T-cell (primary cell): ENCODE measurements at regions of chr17 and their contacts with region 1.

Region 1: DNA sequence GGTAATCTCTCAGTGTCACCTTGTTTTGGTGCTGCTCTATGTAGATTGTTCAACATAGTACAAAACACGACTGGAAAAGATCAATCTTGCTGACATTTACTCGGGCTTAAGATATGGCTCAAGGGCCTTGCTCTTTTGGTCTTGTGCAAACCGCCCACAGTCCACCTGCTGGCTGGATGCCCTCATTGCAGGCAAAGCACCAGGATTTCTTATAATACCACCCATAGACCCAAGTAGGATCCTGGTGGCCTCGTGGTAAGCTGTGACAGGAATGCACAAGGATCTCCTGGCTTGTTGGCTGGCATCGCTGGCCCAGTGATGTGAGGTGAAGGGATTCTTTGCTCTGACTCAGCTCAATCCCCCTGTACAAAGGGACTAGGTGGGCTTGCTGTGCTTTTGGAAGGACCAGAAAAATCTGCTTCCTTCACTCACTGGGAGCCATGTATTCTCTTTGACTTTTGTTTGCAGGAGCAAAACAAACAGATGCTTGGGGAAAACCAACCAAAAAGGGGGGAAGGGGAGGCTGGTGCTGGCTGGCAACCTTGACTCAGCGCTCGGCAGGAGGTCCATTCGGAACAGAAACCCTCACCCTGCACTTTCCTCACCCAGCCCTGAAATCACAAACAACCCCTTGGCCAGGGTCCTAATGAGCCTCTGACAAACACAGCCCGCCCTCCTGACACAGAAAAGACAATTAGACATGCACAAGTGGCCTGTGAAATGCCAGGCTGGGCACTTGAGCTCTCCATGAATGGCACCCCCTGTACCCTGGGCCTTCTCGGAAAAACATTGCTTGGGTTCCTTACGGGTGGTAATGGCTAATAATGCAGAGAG is 36.6 kb upstream of the MED9 start:
- DNase-seq: peak; percentile 37 to 86 (median 70)
- ATAC-seq: peak; percentile 55 to 79 (median 72)
- H3K4me3 ChIP-seq: no peak overlapping the region
- H3K4me3 Mint-ChIP-seq: no peak overlapping the region
- H3K27ac ChIP-seq: no peak overlapping the region
- H3K27ac Mint-ChIP-seq: peak overlapping the region in 1 of 2 donors; percentile 34
- H3K4me1 ChIP-seq: no peaks in the 10 kb centered on the region
- H3K4me1 Mint-ChIP-seq: peaks cover 0 to 8% (median 8%) of the 10 kb centered on the region in 3 donors
- H3K27me3 ChIP-seq: no peaks in the 10 kb centered on the region
- H3K27me3 Mint-ChIP-seq: no peaks in the 10 kb centered on the region

Region 2: DNA sequence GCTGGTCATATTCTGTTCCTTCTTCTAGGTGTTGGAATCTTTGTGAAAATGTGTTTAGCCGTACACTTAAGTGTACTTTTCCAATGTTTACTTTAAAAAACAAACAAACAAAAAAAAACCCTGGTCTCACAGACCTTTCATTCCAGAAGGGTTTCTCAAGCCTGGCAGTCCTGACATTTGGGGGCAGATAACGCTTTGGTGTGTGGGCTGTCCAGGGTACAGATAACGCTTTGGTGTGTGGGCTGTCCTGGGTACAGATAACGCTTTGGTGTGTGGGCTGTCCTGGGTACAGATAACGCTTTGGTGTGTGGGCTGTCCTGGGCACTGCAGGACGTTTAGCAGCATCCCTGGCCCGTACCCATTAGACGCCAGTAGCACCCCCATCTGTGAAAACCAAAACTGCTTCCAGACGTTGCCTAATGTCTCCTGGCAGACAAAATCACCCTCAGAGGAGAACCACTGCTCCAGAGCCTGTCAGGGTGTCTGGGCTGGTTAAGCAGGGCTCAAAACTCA is 188.0 kb before region 1 on chr17:
- CTCF ChIA-PET with region 1: no interaction called
- POLR2A ChIA-PET with region 1: no interaction called
- DNase-seq: no peak
- ATAC-seq: no peak
- H3K4me3 ChIP-seq: no peak overlapping the region
- H3K4me3 Mint-ChIP-seq: no peak overlapping the region
- H3K27ac ChIP-seq: no peak overlapping the region
- H3K27ac Mint-ChIP-seq: no peak overlapping the region
- H3K4me1 ChIP-seq: no peaks in the 10 kb centered on the region
- H3K4me1 Mint-ChIP-seq: peaks cover 0 to 5% (median 4%) of the 10 kb centered on the region in 3 donors
- H3K27me3 ChIP-seq: no peaks in the 10 kb centered on the region
- H3K27me3 Mint-ChIP-seq: no peaks in the 10 kb centered on the region

Region 3: DNA sequence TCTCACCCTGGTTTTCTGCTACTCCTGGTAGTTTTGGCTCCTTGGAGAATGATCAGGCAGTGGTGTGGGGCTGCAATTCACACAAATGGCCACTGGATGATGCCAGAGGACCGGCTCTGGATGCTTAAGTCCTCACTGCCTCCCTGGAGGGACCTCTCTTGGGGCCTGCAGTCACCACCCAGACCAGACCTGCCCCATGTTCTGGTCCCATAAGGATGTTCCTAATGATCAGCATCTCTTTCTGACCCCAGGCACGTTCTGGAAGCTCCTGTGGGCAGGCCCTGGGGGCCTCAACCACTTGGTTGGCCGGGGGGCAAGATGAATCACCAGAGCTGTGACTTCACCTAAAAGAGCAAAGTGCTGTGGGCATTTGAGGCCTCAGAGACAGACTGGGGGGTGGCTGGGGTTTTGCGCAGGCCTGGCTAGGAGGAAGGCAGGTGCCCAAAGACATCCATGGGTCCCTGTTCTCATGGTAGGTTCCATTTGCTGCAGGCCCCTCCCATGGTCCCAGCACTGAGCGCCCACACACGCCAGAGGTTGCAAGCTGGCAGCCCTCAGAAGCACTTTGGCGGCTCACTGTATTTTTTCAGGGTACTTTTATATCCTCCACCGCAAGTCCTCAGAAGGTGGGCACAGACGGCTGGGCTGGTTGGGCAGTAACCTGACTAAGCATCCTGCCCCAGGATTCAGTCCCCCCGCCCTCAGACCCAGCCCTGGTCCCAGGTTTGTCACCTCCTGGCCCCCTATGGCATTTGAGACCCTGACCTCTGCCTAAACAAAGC is 83.9 kb before region 1 on chr17:
- CTCF ChIA-PET with region 1: interaction called in 1 of 2 experiments, 15 read pairs
- POLR2A ChIA-PET with region 1: no interaction called
- DNase-seq: peak; percentile 34 to 84 (median 59)
- ATAC-seq: peak; percentile 78 to 81 (median 79)
- H3K4me3 ChIP-seq: no peak overlapping the region
- H3K4me3 Mint-ChIP-seq: no peak overlapping the region
- H3K27ac ChIP-seq: no peak overlapping the region
- H3K27ac Mint-ChIP-seq: no peak overlapping the region
- H3K4me1 ChIP-seq: peaks cover 0 to 11% of the 10 kb centered on the region in 2 experiments
- H3K4me1 Mint-ChIP-seq: peaks cover 0 to 2% (median 0%) of the 10 kb centered on the region in 3 donors
- H3K27me3 ChIP-seq: peaks cover 0 to 17% of the 10 kb centered on the region in 2 experiments
- H3K27me3 Mint-ChIP-seq: peaks cover 0 to 4% of the 10 kb centered on the region in 2 donors

Region 4: GRCh38 chr17:17890773-17891759 is 450.8 kb after region 1 on chr17:
- CTCF ChIA-PET with region 1: no interaction called
- POLR2A ChIA-PET with region 1: no interaction called
- DNase-seq: peak in 33 of 35 experiments; percentile 5 to 57 (median 30)
- ATAC-seq: peak; percentile 63 to 87 (median 86)
- H3K4me3 ChIP-seq: no peak overlapping the region
- H3K4me3 Mint-ChIP-seq: no peak overlapping the region
- H3K27ac ChIP-seq: no peak overlapping the region
- H3K27ac Mint-ChIP-seq: peak overlapping the region in 1 of 2 donors; percentile 76
- H3K4me1 ChIP-seq: no peaks in the 10 kb centered on the region
- H3K4me1 Mint-ChIP-seq: peaks cover 2 to 22% (median 11%) of the 10 kb centered on the region in 3 donors
- H3K27me3 ChIP-seq: no peaks in the 10 kb centered on the region
- H3K27me3 Mint-ChIP-seq: no peaks in the 10 kb centered on the region